AG04449 (cell line): ENCODE measurements at regions of chr6 and their contacts with region 1.

Region 1: DNA sequence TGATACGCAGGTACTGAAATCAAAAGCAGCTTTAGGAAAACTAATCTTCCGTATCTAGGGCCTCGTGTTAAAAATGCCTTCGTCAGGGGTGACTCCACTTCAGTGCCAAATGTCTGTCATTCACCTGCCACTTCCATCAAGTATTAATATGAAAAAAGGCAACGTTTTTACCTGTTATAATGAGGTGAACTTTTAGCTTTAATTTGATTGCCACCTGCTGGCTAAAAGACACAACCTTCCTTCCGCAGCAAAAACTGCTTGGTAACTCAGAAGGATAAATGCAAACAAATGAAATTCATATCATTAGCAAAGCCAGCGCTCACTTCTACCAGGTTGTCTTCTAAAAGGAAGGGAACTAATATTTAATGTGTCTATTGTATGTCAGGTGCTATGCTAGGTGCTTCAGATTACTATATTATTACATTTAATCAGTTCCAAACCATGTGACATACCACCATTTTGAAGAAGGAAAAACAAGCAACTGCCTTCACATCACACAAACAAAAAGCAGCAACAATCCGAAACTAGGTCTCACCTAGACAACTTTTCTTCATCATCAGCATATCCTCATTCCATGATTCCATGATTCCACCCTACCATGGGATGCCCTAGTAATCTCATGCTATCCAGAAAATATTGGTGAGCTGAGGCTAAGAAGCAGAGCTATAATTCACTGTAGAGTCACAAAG is 20.6 kb upstream of the ARHGAP18 start:
- DNase-seq: no peak
- H3K4me3 ChIP-seq: no peak overlapping the region
- CTCF ChIP-seq: peak; percentile 12

Region 2: GRCh38 chr6:129744201-129744879 is 13.7 kb after region 1 on chr6:
- CTCF ChIA-PET with region 1: interaction called, 22 read pairs
- POLR2A ChIA-PET with region 1: no interaction called
- DNase-seq: peak; percentile 31
- H3K4me3 ChIP-seq: no peak overlapping the region
- CTCF ChIP-seq: no peak